ENCODE measurements at regions of chr15 and their contacts with region 1.

Region 1: GRCh38 chr15:35289024-35289617 is 204.0 kb upstream of the NANOGP8 start:
- DNase-seq: peak; percentile 55
- H3K4me3 ChIP-seq: no peak overlapping the region
- H3K27ac ChIP-seq: no peak overlapping the region
- H3K27me3 ChIP-seq: no peaks in the 10 kb centered on the region
- CTCF ChIP-seq: peak; percentile 87

Region 2: DNA sequence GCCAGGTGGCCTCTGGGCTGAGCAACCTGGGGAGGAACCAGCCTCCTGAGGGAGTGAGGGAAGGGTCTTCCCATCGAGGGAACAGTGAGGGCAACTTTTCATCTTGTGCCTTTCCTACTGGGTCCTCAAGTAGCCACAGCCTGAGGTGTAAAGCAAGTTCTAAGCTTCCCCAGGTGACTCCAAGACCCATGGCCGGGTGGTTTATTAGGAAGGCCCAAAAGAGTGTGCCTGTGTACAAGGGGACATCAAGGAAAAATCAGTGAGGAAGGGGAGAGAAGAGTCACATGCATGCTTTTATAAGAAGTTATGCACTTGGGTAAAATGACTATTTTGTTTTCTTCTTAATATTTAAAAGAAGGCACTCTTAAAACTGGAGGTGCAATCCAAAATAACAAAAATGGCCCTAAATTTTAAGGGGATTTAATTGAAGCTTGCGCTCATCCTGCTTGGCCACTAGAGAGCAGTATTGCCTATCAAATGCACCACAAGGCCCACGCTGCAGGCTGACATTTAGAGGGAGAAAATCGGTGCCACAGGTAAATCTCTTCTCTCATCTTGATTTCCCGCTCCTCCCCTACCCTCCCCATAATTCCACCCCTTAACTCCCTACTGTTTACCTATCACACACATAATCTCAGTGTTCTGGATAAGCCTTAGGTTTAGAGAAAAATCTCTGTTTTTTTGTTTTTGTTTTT is 210.8 kb before region 1 on chr15:
- CTCF ChIA-PET with region 1: interaction called, 51 read pairs
- POLR2A ChIA-PET with region 1: no interaction called
- DNase-seq: peak; percentile 44
- H3K4me3 ChIP-seq: no peak overlapping the region
- H3K27ac ChIP-seq: no peak overlapping the region
- H3K27me3 ChIP-seq: no peaks in the 10 kb centered on the region
- CTCF ChIP-seq: peak; percentile 83

Region 3: GRCh38 chr15:35095941-35096340 is 193.2 kb before region 1 on chr15:
- CTCF ChIA-PET with region 1: interaction called, 11 read pairs
- POLR2A ChIA-PET with region 1: no interaction called
- DNase-seq: no peak
- H3K4me3 ChIP-seq: no peak overlapping the region
- H3K27ac ChIP-seq: no peak overlapping the region
- H3K27me3 ChIP-seq: no peaks in the 10 kb centered on the region
- CTCF ChIP-seq: no peak

Region 4: DNA sequence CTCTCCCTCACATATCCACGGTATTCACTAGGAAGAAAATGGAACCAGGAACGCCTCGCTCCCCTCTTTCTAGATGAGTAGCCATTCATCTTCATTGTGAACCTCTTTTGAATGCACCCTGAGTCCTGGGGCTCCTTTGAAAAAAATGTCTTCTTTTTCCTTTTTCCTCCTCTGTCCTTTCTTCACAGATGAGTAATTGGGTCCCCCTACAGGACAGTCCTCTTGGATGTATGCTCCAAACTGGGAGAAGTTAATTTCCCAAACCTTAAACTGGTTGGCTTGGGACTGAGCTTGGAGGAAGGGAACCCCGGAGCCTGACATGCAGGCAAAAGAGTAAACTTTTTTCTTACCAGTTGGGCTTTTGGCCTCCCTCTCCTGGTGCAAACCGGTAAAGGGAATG is 148.0 kb after region 1 on chr15:
- CTCF ChIA-PET with region 1: interaction called, 188 read pairs
- POLR2A ChIA-PET with region 1: no interaction called
- DNase-seq: no peak
- H3K4me3 ChIP-seq: no peak overlapping the region
- H3K27ac ChIP-seq: no peak overlapping the region
- H3K27me3 ChIP-seq: no peaks in the 10 kb centered on the region
- CTCF ChIP-seq: 0 out of 2 replicates have a peak, but pooled peaks have one; percentile 25

Region 5: GRCh38 chr15:35519541-35520149 is 230.5 kb after region 1 on chr15:
- CTCF ChIA-PET with region 1: interaction called, 15 read pairs
- POLR2A ChIA-PET with region 1: no interaction called
- DNase-seq: peak; percentile 18
- H3K4me3 ChIP-seq: no peak overlapping the region
- H3K27ac ChIP-seq: no peak overlapping the region
- H3K27me3 ChIP-seq: no peaks in the 10 kb centered on the region
- CTCF ChIP-seq: peak; percentile 70

Measured in AG04450 (cell line).